ENCODE measurements at regions of chr6 and their contacts with region 1.

Region 1: DNA sequence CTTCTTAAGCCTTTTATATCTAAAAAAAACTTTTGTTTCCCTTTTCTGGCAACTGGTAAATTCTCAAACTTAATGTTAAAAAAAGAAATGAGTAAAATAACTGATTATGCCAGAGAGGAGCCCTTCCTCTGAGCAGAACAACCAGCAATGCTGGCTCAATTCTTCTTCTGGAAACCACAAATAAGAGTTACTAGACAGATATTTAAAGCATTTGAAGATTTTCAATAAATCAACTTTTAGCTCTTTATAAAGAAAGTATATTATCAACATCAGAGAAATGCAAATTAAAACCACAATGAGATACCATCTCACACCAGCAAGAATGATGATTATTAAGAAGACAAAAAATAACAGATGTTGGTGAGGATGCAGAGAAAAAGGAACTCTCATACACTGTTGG is 61.1 kb upstream of the TCF21 start:
- DNase-seq: no peak
- ATAC-seq: no peak
- H3K4me3 Mint-ChIP-seq: no peak overlapping the region
- H3K27ac Mint-ChIP-seq: no peak overlapping the region
- H3K4me1 Mint-ChIP-seq: no peaks in the 10 kb centered on the region
- H3K27me3 Mint-ChIP-seq: peaks cover 18% of the 10 kb centered on the region

Region 2: GRCh38 chr6:133724726-133725125 is 103.0 kb before region 1 on chr6:
- CTCF ChIA-PET with region 1: no interaction called
- POLR2A ChIA-PET with region 1: no interaction called
- DNase-seq: no peak
- ATAC-seq: no peak
- H3K4me3 Mint-ChIP-seq: no peak overlapping the region
- H3K27ac Mint-ChIP-seq: no peak overlapping the region
- H3K4me1 Mint-ChIP-seq: no peaks in the 10 kb centered on the region
- H3K27me3 Mint-ChIP-seq: peaks cover 4% of the 10 kb centered on the region

Region 3: GRCh38 chr6:133837801-133838349 is 10.1 kb after region 1 on chr6:
- CTCF ChIA-PET with region 1: interaction called, 11 read pairs
- POLR2A ChIA-PET with region 1: no interaction called
- DNase-seq: peak; percentile 71
- ATAC-seq: peak; percentile 92
- H3K4me3 Mint-ChIP-seq: peak overlapping the region; percentile 72
- H3K27ac Mint-ChIP-seq: no peak overlapping the region
- H3K4me1 Mint-ChIP-seq: peaks cover 3% of the 10 kb centered on the region
- H3K27me3 Mint-ChIP-seq: peaks cover 14% of the 10 kb centered on the region

Region 4: DNA sequence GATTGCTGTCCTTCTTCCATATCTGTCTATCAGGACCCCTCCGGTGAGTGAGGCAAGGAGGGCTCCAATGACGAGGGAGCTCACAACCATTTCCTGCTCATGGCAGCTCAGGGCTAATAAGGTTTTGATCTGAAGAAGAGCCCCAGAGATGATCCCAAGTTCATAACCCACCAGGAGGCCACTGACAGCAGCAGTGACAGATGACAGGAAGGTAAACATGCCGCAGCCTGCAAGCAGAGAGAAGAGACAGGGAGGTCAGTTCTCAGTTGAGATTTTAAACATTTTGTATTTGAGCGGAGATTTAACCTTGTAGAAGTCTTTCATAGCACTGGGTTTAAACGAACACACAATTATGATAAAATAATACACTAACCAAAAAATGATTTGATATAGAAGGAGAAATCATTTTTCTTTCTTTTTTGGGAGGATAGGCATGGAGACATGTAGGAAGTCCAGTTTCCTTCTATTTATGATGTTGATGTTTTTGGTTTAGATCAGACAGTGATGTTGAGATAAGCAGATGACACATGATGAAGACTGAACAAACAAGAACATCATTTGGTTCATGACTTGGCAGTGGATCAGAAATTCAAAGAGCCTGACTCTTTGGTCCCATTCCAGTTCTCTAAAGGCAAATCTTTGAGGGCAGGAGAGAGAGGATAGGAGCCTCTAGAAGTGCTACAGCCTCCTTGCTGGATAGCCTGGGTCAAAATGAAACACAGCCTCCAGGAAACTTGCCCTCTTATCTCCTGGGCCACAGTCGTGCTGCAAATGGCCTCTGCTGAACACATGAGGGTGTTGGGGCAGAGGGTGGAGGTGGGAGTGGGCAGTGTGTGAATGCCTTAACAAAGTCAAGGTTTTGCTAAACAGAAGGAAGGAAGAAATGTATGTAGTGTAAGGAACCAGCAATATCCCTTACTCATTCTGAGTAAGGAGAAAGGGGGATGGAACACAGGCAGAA is 202.0 kb after region 1 on chr6:
- CTCF ChIA-PET with region 1: no interaction called
- POLR2A ChIA-PET with region 1: no interaction called
- DNase-seq: no peak
- ATAC-seq: no peak
- H3K4me3 Mint-ChIP-seq: no peak overlapping the region
- H3K27ac Mint-ChIP-seq: no peak overlapping the region
- H3K4me1 Mint-ChIP-seq: peaks cover 8% of the 10 kb centered on the region
- H3K27me3 Mint-ChIP-seq: peaks cover 10% of the 10 kb centered on the region